Caco-2 (cell line): ENCODE measurements at regions of chr6 and their contacts with region 1.

Region 1: GRCh38 chr6:2791124-2791974 is 26.2 kb downstream of the WRNIP1 start:
- DNase-seq: peak; percentile 67 to 74
- H3K4me3 ChIP-seq: no peak overlapping the region
- H3K4me3 Mint-ChIP-seq: no peak overlapping the region
- H3K27ac Mint-ChIP-seq: no peak overlapping the region
- H3K4me1 ChIP-seq: peaks cover 8% of the 10 kb centered on the region; the same call in 1 of the 2 replicates
- H3K4me1 Mint-ChIP-seq: peaks cover 7% of the 10 kb centered on the region
- H3K27me3 ChIP-seq: no peaks in the 10 kb centered on the region
- H3K27me3 Mint-ChIP-seq: no peaks in the 10 kb centered on the region
- CTCF ChIP-seq: peak; percentile 78

Region 2: DNA sequence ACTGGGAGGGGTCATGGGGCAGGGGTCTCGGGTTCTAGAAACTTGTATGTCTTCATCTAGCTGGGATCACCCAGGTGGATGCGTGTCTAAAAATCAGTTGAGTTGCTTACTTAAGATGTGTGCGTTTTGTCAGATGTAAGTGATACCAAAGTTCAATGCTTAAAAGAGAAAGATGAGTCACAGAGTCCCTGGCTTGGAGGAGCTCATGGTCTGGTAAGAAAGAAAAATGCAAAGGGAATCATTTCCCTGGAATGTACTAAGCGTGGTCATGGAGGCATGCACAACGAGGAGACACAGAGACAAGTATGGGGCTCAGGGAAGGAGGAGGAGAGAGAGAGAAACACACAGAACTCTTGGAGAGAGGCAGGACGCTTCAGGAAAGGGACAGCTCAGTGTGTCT is 359.1 kb before region 1 on chr6:
- CTCF ChIA-PET with region 1: no interaction called
- POLR2A ChIA-PET with region 1: no interaction called
- intact Hi-C with region 1: no loop called
- DNase-seq: no peak
- H3K4me3 ChIP-seq: no peak overlapping the region
- H3K4me3 Mint-ChIP-seq: no peak overlapping the region
- H3K27ac Mint-ChIP-seq: no peak overlapping the region
- H3K4me1 ChIP-seq: peaks cover 7% of the 10 kb centered on the region
- H3K4me1 Mint-ChIP-seq: peaks cover 14% of the 10 kb centered on the region
- H3K27me3 ChIP-seq: no peaks in the 10 kb centered on the region
- H3K27me3 Mint-ChIP-seq: no peaks in the 10 kb centered on the region
- CTCF ChIP-seq: no peak

Region 3: GRCh38 chr6:2714111-2714895 is 77.0 kb before region 1 on chr6:
- CTCF ChIA-PET with region 1: no interaction called
- POLR2A ChIA-PET with region 1: no interaction called
- intact Hi-C with region 1: no loop called
- DNase-seq: no peak
- H3K4me3 ChIP-seq: no peak overlapping the region
- H3K4me3 Mint-ChIP-seq: no peak overlapping the region
- H3K27ac Mint-ChIP-seq: peak overlapping the region; percentile 25
- H3K4me1 ChIP-seq: peaks cover 13% of the 10 kb centered on the region
- H3K4me1 Mint-ChIP-seq: no peaks in the 10 kb centered on the region
- H3K27me3 ChIP-seq: no peaks in the 10 kb centered on the region; the same call in 1 of the 2 replicates
- H3K27me3 Mint-ChIP-seq: no peaks in the 10 kb centered on the region
- CTCF ChIP-seq: no peak

Region 4: GRCh38 chr6:2738373-2738979 is 52.9 kb before region 1 on chr6:
- CTCF ChIA-PET with region 1: interaction called, 15 read pairs
- POLR2A ChIA-PET with region 1: no interaction called
- intact Hi-C with region 1: no loop called
- DNase-seq: peak; percentile 58 to 73
- H3K4me3 ChIP-seq: no peak overlapping the region
- H3K4me3 Mint-ChIP-seq: no peak overlapping the region
- H3K27ac Mint-ChIP-seq: no peak overlapping the region
- H3K4me1 ChIP-seq: peaks cover 10% of the 10 kb centered on the region
- H3K4me1 Mint-ChIP-seq: peaks cover 3% of the 10 kb centered on the region
- H3K27me3 ChIP-seq: no peaks in the 10 kb centered on the region
- H3K27me3 Mint-ChIP-seq: no peaks in the 10 kb centered on the region
- CTCF ChIP-seq: peak; percentile 57 to 85

Region 5: DNA sequence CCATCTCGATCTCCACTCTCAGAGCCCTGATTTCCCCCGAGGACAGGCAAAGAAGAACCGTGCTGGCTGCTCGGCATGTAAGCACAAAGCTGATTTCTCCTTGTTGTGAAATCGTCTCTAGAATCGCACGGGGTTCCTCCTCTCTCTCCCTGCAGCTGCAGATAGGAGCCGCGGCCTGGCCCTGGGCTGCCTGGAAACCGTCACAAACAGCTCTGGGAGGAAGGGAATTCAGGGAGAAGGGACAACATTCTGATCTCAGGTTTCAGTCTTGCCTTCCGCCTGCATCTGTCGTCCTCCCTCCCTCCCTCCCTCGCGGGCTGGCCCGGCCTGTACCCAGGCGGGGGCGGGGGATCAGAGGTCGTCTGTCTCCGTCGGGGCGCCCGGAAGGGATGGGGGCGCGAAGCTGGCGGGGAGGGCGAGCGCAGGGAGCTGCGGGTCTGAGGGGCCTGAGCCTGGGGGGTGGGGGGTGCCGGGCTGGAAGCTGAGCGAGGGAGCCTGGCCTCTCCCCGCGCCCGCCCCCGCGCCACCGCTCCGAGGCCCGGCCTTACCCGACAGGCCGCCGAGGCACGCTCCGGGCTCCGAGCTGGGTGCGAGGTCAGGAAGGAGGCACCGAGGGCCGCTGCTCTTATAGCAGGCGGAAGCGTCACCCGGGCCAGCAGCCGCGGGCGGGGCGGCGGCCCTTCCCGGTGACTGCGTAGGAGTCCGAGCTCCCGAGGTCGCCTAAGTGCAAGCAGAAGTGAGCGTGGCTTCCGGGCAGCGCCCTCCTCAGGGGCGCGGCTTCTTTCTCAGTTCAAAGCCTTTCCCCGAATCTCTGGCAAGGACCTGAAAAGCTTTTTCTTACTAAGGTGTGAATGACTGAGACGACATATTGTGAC is 50.2 kb after region 1 on chr6 and contains the start of gene SERPINB1:
- CTCF ChIA-PET with region 1: interaction called, 67 read pairs
- POLR2A ChIA-PET with region 1: interaction called, 20 read pairs
- intact Hi-C with region 1: loop called (anchors 1 kb)
- DNase-seq: peak; percentile 92 to 93
- H3K4me3 ChIP-seq: peak within 1 kb of the TSS; percentile 44
- H3K4me3 Mint-ChIP-seq: peak within 1 kb of the TSS; percentile 98
- H3K27ac Mint-ChIP-seq: peak within 1 kb of the TSS; percentile 97
- H3K4me1 ChIP-seq: peaks cover 42% of the 10 kb centered on the region
- H3K4me1 Mint-ChIP-seq: peaks cover 16% of the 10 kb centered on the region
- H3K27me3 ChIP-seq: no peaks in the 10 kb centered on the region
- H3K27me3 Mint-ChIP-seq: no peaks in the 10 kb centered on the region
- CTCF ChIP-seq: peak in 1 of 2 experiments; percentile 29
- total RNA-seq, gene SERPINB1: 75.6 and 81.9 TPM in 2 replicates

Region 6: GRCh38 chr6:2891768-2892170 is 100.4 kb after region 1 on chr6:
- CTCF ChIA-PET with region 1: interaction called, 22 read pairs
- POLR2A ChIA-PET with region 1: no interaction called
- intact Hi-C with region 1: no loop called
- DNase-seq: peak; percentile 92 to 93
- H3K4me3 ChIP-seq: peak overlapping the region; percentile 71
- H3K4me3 Mint-ChIP-seq: peak overlapping the region; percentile 92
- H3K27ac Mint-ChIP-seq: peak overlapping the region; percentile 80
- H3K4me1 ChIP-seq: peaks cover 8% of the 10 kb centered on the region; the same call in 1 of the 2 replicates
- H3K4me1 Mint-ChIP-seq: peaks cover 10% of the 10 kb centered on the region
- H3K27me3 ChIP-seq: no peaks in the 10 kb centered on the region
- H3K27me3 Mint-ChIP-seq: no peaks in the 10 kb centered on the region
- CTCF ChIP-seq: no peak

Region 7: DNA sequence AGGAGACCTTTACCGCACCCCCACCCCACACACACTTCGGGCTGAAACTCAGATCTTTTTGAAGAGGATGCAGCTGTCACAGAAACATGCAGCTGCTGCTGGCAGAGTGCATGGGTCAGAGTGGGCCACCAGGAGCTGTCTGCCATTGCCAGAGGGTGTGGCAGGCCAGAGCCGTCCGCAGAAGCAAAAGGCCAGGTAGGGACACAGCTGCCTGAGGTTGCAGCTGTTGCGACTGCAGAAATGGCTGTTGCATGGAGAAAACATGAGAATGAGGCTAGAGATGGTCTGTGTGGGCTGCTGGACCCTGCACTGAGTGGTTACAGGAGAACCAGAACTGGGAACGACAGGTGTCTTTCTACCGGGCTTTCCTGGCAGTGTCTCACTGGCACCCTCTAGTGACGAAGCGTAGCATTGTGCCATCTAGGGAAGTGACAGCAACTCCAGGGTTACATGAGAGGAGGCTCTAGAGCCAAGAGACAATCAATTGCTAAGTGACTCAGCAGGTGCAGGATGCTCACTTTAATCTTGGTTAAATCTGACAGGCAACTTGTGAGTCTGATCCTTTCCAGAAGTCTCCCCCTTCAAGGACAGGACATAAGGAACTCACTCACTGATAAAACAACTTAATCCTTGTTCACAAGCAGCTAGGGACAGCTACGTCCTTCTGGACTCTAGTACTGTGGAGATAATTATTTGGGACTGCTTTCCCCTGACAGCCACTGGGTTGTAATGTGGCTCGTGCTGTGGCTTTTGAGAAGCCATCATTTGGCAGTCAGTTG is 140.8 kb after region 1 on chr6:
- CTCF ChIA-PET with region 1: interaction called, 22 read pairs
- POLR2A ChIA-PET with region 1: no interaction called
- intact Hi-C with region 1: loop called (anchors 1 kb)
- DNase-seq: peak; percentile 85 to 90
- H3K4me3 ChIP-seq: no peak overlapping the region
- H3K4me3 Mint-ChIP-seq: no peak overlapping the region
- H3K27ac Mint-ChIP-seq: no peak overlapping the region
- H3K4me1 ChIP-seq: no peaks in the 10 kb centered on the region
- H3K4me1 Mint-ChIP-seq: peaks cover 11% of the 10 kb centered on the region
- H3K27me3 ChIP-seq: no peaks in the 10 kb centered on the region
- H3K27me3 Mint-ChIP-seq: no peaks in the 10 kb centered on the region
- CTCF ChIP-seq: peak; percentile 91 to 97

Region 8: DNA sequence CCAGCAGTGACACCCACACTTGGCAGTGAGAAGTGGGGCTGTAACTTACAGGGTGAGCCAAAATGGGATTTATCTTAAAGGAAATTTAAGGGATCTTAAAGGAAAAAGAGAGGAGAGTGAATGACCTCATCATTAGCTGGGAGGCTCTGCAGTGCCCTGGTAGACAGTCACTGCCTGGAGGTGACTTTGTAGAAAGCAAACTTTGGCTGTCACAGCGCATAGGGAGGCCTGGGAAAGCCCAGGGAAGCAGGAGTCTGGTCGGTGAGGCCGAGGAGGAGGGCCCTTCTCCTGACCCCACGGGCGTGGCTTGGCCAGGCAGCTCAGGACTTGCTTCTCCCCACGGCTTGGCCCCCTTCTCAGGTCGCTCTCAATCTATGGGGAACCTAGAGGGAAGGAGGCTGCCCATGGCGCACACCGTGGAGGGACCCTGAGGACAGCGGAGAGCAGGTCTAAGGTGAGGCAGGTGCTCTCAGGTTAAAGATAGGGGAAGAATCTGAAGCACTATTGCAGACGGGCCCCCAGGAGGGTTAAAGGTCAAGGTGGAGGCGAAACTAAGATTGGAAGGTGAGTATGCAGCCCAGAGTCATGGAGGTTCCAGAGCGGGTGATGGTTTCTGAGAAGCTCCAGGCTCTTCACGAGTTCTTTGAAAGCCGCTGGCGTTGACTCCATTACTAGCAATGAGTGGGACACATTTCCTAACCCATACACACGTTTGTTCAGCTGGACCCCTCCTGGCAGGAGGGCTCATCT is 261.3 kb after region 1 on chr6:
- CTCF ChIA-PET with region 1: interaction called, 3 read pairs
- POLR2A ChIA-PET with region 1: no interaction called
- intact Hi-C with region 1: loop called (anchors 10 kb)
- DNase-seq: peak; percentile 63 to 74
- H3K4me3 ChIP-seq: peak overlapping the region; percentile 82
- H3K4me3 Mint-ChIP-seq: peak overlapping the region; percentile 84
- H3K27ac Mint-ChIP-seq: peak overlapping the region; percentile 89
- H3K4me1 ChIP-seq: peaks cover 13% of the 10 kb centered on the region
- H3K4me1 Mint-ChIP-seq: peaks cover 10% of the 10 kb centered on the region
- H3K27me3 ChIP-seq: no peaks in the 10 kb centered on the region
- H3K27me3 Mint-ChIP-seq: no peaks in the 10 kb centered on the region
- CTCF ChIP-seq: no peak